Mucosa of descending colon (tissue), 3 donors: ENCODE measurements at regions of chr5 and their contacts with region 1.

Region 1: GRCh38 chr5:81513982-81514381 is 120.0 kb upstream of the ACOT12 start:
- DNase-seq: no peak
- ATAC-seq: no peak
- H3K4me3 ChIP-seq: no peak overlapping the region
- H3K4me1 ChIP-seq: no peaks in the 10 kb centered on the region
- CTCF ChIP-seq: no peak

Region 2: GRCh38 chr5:81639556-81639955 is 125.6 kb after region 1 on chr5:
- intact Hi-C with region 1: no loop called
- DNase-seq: no peak
- ATAC-seq: no peak
- H3K4me3 ChIP-seq: no peak overlapping the region
- H3K4me1 ChIP-seq: no peaks in the 10 kb centered on the region
- CTCF ChIP-seq: no peak

Region 3: GRCh38 chr5:82165740-82166530 is 652.0 kb after region 1 on chr5:
- intact Hi-C with region 1: loop called in 1 of 2 experiments (anchors 10 kb)
- DNase-seq: peak in 1 of 3 donors; percentile 59
- ATAC-seq: peak; percentile 95
- H3K4me3 ChIP-seq: no peak overlapping the region
- H3K4me1 ChIP-seq: peaks cover 6% of the 10 kb centered on the region
- CTCF ChIP-seq: no peak